Activated naive CD4-positive, alpha-beta T cell treated with anti-CD3 and anti-CD28 coated beads, Interleukin-2, amount 10 ng/mL, durations not matched to agents 7 days and 5 days (primary cell): ENCODE measurements at regions of chrX and their contacts with region 1.

Region 1: GRCh38 chrX:153667956-153668396 is 5.6 kb downstream of the PNCK start:
- DNase-seq: peak; percentile 85
- H3K4me3 Mint-ChIP-seq: peak overlapping the region; percentile 67
- H3K27ac Mint-ChIP-seq: no peak overlapping the region
- H3K4me1 Mint-ChIP-seq: peaks cover 7% of the 10 kb centered on the region
- H3K27me3 Mint-ChIP-seq: peaks cover 58% of the 10 kb centered on the region

Region 2: DNA sequence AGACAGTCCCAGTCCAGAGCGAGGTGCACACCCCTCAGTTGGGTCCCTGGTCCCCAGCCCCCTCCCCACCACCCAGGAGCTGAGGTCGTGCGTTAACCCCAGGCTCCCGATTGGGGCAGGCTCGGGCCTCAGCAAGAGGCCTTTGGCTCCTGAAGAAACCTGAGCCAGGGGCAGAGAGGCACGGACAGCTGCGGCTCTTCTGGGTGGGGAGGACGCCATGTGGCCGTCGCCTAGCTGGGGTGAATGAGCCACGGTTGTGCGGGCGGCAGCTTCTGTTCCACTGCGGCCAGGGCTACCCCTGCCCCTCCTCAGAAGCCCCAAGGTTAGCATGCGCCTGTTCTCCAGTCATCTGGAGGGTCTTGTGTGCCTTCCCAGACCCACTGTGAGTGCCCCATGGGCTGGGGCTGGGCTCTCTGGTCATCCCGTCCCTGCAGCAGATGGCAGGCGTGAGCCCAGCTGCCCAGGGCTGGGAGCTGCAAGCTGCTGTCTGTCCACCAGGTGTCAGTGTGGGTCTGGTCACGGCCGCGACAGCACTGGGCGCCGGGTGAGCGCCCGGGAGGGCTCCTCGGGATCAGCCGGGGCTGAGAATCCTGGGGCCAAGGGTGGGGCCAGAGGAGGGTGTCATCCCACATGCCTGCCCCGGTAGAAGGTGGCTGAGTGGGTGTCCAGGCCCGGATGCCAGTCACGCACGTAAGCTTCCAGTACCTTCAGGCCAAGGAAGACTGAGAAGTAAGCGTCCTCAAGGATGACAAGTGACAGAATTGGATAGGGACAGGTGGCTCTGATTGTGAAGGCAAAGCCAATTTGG is 128.6 kb before region 1 on chrX:
- CTCF ChIA-PET with region 1: interaction called, 53 read pairs
- DNase-seq: peak; percentile 68
- H3K4me3 Mint-ChIP-seq: no peak overlapping the region
- H3K27ac Mint-ChIP-seq: no peak overlapping the region
- H3K4me1 Mint-ChIP-seq: no peaks in the 10 kb centered on the region
- H3K27me3 Mint-ChIP-seq: peaks cover 10% of the 10 kb centered on the region

Region 3: GRCh38 chrX:153609917-153610428 is 58.0 kb before region 1 on chrX:
- CTCF ChIA-PET with region 1: interaction called, 15 read pairs
- DNase-seq: peak; percentile 80
- H3K4me3 Mint-ChIP-seq: peak overlapping the region; percentile 69
- H3K27ac Mint-ChIP-seq: no peak overlapping the region
- H3K4me1 Mint-ChIP-seq: peaks cover 15% of the 10 kb centered on the region
- H3K27me3 Mint-ChIP-seq: peaks cover 62% of the 10 kb centered on the region

Region 4: GRCh38 chrX:153657161-153657560 is 10.8 kb before region 1 on chrX:
- CTCF ChIA-PET with region 1: interaction called, 23 read pairs
- DNase-seq: no peak
- H3K4me3 Mint-ChIP-seq: no peak overlapping the region
- H3K27ac Mint-ChIP-seq: no peak overlapping the region
- H3K4me1 Mint-ChIP-seq: peaks cover 3% of the 10 kb centered on the region
- H3K27me3 Mint-ChIP-seq: peaks cover 27% of the 10 kb centered on the region

Region 5: GRCh38 chrX:153782313-153782712 is 114.3 kb after region 1 on chrX:
- CTCF ChIA-PET with region 1: no interaction called
- DNase-seq: no peak
- H3K4me3 Mint-ChIP-seq: no peak overlapping the region
- H3K27ac Mint-ChIP-seq: no peak overlapping the region
- H3K4me1 Mint-ChIP-seq: no peaks in the 10 kb centered on the region
- H3K27me3 Mint-ChIP-seq: peaks cover 29% of the 10 kb centered on the region